MCF 10A (cell line): ENCODE measurements at regions of chr3 and their contacts with region 1.

Region 1: GRCh38 chr3:81315030-81315429 is 446.4 kb downstream of the GBE1 start:
- DNase-seq: no peak
- H3K4me3 Mint-ChIP-seq: no peak overlapping the region
- H3K27ac Mint-ChIP-seq: no peak overlapping the region
- H3K4me1 Mint-ChIP-seq: no peaks in the 10 kb centered on the region
- H3K27me3 Mint-ChIP-seq: peaks cover 26% of the 10 kb centered on the region
- CTCF ChIP-seq: no peak

Region 2: GRCh38 chr3:81302045-81302444 is 13.0 kb before region 1 on chr3:
- CTCF ChIA-PET with region 1: interaction called, 14 read pairs
- POLR2A ChIA-PET with region 1: no interaction called
- intact Hi-C with region 1: no loop called
- DNase-seq: peak; percentile 61
- H3K4me3 Mint-ChIP-seq: no peak overlapping the region
- H3K27ac Mint-ChIP-seq: no peak overlapping the region
- H3K4me1 Mint-ChIP-seq: no peaks in the 10 kb centered on the region
- H3K27me3 Mint-ChIP-seq: peaks cover 32% of the 10 kb centered on the region
- CTCF ChIP-seq: peak; percentile 52